ENCODE measurements at regions of chr22 and their contacts with region 1.

Region 1: GRCh38 chr22:40950962-40951794 is at the start of gene RBX1:
- DNase-seq: peak; percentile 99
- H3K4me3 Mint-ChIP-seq: peak within 1 kb of the TSS; percentile 93
- H3K27ac Mint-ChIP-seq: peak within 1 kb of the TSS; percentile 98
- H3K4me1 Mint-ChIP-seq: peaks cover 23% of the 10 kb centered on the region
- H3K27me3 Mint-ChIP-seq: no peaks in the 10 kb centered on the region
- total RNA-seq, gene RBX1: 90.1 to 93.3 TPM

Region 2: DNA sequence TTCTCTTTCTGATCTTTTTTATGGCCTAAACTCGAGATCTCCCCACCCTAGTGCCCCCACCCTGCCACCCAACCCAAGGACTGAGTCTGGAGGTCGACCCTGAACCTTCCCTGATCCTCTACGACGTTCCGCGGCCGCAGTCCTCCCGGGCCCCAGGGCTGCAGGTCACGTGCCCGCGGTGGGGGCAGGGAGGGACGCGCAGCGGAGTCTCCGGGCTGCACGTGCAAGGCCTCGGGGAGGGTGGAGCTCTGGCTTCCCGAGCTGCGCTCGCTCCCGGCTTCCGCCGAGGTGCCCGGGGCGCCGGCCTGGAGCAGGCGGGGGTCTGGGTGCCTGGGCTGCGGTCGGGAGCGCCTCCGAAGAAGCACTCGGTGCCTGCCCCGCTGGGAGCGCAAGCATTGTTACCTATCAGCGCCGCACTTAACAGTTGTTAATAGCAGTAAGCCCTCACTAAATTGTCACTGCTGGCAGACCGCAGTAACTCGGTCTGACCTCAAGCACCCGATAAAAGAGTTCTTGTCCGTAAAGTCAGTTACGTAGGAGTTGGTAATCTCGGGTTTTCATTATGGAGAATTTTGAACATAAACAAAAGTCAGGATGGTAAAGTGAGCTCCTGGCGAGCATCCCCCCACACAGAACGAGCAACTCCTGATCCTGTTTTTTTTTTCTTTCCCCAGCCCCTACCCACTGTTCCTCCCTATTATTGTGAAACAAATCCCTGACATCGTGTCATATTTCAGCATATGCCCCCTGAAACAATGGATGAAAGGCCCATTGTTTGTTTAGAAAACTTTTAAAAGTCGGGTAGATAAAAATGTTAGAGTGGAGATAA is 71.5 kb after region 1 on chr22:
- CTCF ChIA-PET with region 1: no interaction called
- intact Hi-C with region 1: loop called (anchors 1 kb)
- DNase-seq: peak; percentile 88
- H3K4me3 Mint-ChIP-seq: peak overlapping the region; percentile 80
- H3K27ac Mint-ChIP-seq: peak overlapping the region; percentile 61
- H3K4me1 Mint-ChIP-seq: peaks cover 16% of the 10 kb centered on the region
- H3K27me3 Mint-ChIP-seq: no peaks in the 10 kb centered on the region

Region 3: GRCh38 chr22:41217553-41218157 is 266.5 kb after region 1 on chr22:
- CTCF ChIA-PET with region 1: no interaction called
- intact Hi-C with region 1: loop called (anchors 1 kb)
- DNase-seq: peak; percentile 84
- H3K4me3 Mint-ChIP-seq: peak overlapping the region; percentile 63
- H3K27ac Mint-ChIP-seq: peak overlapping the region; percentile 90
- H3K4me1 Mint-ChIP-seq: peaks cover 28% of the 10 kb centered on the region
- H3K27me3 Mint-ChIP-seq: no peaks in the 10 kb centered on the region

Region 4: GRCh38 chr22:41468381-41469217 is 517.4 kb after region 1 on chr22 and contains the starts of genes ACO2 and PHF5A:
- CTCF ChIA-PET with region 1: no interaction called
- intact Hi-C with region 1: loop called (anchors 2 kb)
- DNase-seq: peak; percentile 99
- H3K4me3 Mint-ChIP-seq: peak within 1 kb of the TSS; percentile 75
- H3K27ac Mint-ChIP-seq: peak within 1 kb of the TSS; percentile 96
- H3K4me1 Mint-ChIP-seq: peaks cover 62% of the 10 kb centered on the region
- H3K27me3 Mint-ChIP-seq: no peaks in the 10 kb centered on the region
- total RNA-seq, gene ACO2: 113 to 118 TPM
- total RNA-seq, gene PHF5A: 67.5 to 69.0 TPM